Heart right ventricle (tissue), 16 donors: ENCODE measurements at regions of chr22 and their contacts with region 1.

Region 1: DNA sequence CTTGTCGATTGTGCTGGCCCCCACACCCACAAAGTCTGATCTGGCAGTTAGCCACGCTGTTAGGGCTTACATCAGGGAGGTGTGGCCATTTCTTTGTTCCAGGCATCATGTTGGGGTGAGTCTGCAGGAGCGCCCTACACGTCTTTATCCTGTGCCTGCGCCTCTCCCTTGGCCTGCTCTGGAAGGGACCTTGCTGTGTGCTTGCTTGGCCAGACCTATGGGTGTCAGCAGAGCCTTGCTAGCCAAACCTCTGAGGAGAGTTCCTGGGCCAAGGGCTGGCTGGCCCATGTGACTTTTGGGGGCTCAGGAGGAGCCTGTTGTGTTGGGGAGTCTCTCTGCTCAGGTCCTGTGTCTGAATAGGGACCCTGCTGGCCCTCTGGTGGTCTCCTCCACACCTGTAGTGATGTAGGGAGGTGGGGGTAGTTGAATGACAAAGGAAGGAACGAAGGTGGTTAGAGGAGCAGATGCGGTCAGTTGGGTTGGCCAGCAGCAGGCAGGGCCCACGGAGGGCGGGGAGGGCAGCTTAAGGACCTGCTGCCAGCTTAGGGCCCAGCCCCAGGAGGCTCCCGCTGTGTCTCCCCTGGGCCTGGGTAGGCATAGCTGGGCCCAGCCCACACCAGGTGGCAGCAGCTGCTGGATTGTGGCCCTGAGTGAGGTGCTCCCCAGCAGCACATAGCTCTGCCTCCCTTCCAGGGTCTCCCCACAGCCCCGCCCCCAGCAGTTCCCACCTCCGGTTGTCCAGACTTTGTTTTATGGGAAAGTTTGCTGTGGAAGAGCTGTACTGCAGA is 7.9 kb downstream of the PPIL2 start:
- DNase-seq: no peak
- ATAC-seq: no peak
- H3K4me3 ChIP-seq: no peak overlapping the region
- H3K27ac ChIP-seq: no peak overlapping the region
- H3K4me1 ChIP-seq: peaks cover 0 to 12% (median 0%) of the 10 kb centered on the region in 9 donors
- H3K27me3 ChIP-seq: no peaks in the 10 kb centered on the region
- CTCF ChIP-seq: no peak

Region 2: GRCh38 chr22:21634844-21635243 is 38.9 kb before region 1 on chr22:
- intact Hi-C with region 1: loop called in 1 of 10 experiments (anchors 5 kb)
- DNase-seq: no peak
- ATAC-seq: no peak
- H3K4me3 ChIP-seq: no peak overlapping the region
- H3K27ac ChIP-seq: no peak overlapping the region
- H3K4me1 ChIP-seq: peaks cover 0 to 6% (median 4%) of the 10 kb centered on the region in 9 donors
- H3K27me3 ChIP-seq: no peaks in the 10 kb centered on the region
- CTCF ChIP-seq: no peak